ENCODE measurements at regions of chr1 and their contacts with region 1.

Region 1: GRCh38 chr1:21368515-21369289 is 71.2 kb upstream of the NBPF3 start:
- DNase-seq: peak; percentile 52 to 64 (median 60)
- H3K4me3 ChIP-seq: no peak overlapping the region
- H3K27ac ChIP-seq: no peak overlapping the region
- H3K4me1 ChIP-seq: peaks cover 0 to 8% (median 2%) of the 10 kb centered on the region in 4 experiments
- H3K27me3 ChIP-seq: no peaks in the 10 kb centered on the region

Region 2: GRCh38 chr1:21198929-21199328 is 169.8 kb before region 1 on chr1:
- CTCF ChIA-PET with region 1: no interaction called
- POLR2A ChIA-PET with region 1: no interaction called
- DNase-seq: no peak
- H3K4me3 ChIP-seq: no peak overlapping the region
- H3K27ac ChIP-seq: no peak overlapping the region
- H3K4me1 ChIP-seq: peaks cover 0 to 3% (median 1%) of the 10 kb centered on the region in 4 experiments
- H3K27me3 ChIP-seq: no peaks in the 10 kb centered on the region

Region 3: GRCh38 chr1:21216835-21217811 is 151.6 kb before region 1 on chr1:
- CTCF ChIA-PET with region 1: interaction called, 14 read pairs
- POLR2A ChIA-PET with region 1: no interaction called
- DNase-seq: peak; percentile 46 to 76 (median 66)
- H3K4me3 ChIP-seq: no peak overlapping the region
- H3K27ac ChIP-seq: no peak overlapping the region
- H3K4me1 ChIP-seq: no peaks in the 10 kb centered on the region
- H3K27me3 ChIP-seq: no peaks in the 10 kb centered on the region

Region 4: DNA sequence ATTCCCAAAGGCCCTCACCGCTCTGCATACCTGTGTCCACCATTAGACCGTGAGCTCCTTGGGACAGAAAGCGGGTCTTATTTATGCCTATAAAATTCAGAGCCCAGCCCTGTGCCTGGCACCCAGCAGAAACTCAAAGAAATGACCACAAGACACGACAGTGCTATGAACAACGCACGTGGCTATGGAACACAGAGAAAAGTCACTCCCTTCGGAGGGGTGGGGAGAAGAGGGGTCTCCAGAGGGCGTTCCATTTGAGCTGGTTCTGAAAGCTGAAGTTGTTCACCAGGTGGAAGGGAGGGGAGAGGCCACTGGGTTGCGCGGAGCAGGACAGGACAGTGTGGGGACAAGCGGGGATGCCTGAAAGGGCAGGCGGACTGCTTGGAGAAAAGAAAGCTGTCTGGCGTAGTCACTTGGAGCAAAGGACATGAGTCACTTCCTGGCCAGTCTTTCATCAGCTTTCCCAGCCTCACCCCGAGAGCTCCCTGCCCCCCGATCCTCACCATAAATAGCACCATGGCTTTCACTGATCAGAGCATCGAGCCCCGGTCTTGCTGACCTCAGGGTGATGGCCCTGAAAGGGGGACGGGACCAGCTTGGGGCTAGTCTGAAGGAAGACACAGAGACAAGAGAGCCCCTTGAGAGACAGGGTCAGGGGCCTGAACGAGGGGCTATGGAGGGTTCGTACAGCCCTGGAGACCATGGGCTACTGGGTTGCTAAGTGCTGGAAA is 107.0 kb before region 1 on chr1:
- CTCF ChIA-PET with region 1: interaction called, 159 read pairs
- POLR2A ChIA-PET with region 1: interaction called, 3 read pairs
- DNase-seq: peak; percentile 71 to 90 (median 82)
- H3K4me3 ChIP-seq: peak overlapping the region in 3 of 7 experiments; percentile 19 to 58 (median 27)
- H3K27ac ChIP-seq: peak overlapping the region in 1 of 2 experiments; percentile 27
- H3K4me1 ChIP-seq: peaks cover 0 to 25% (median 18%) of the 10 kb centered on the region in 4 experiments
- H3K27me3 ChIP-seq: peaks cover 0 to 3% (median 0%) of the 10 kb centered on the region in 5 experiments

Region 5: GRCh38 chr1:21302747-21303715 is 65.7 kb before region 1 on chr1:
- CTCF ChIA-PET with region 1: interaction called, 59 read pairs
- POLR2A ChIA-PET with region 1: no interaction called
- DNase-seq: peak in 2 of 3 donors; percentile 33 to 40
- H3K4me3 ChIP-seq: no peak overlapping the region
- H3K27ac ChIP-seq: no peak overlapping the region
- H3K4me1 ChIP-seq: peaks cover 3 to 10% (median 8%) of the 10 kb centered on the region in 4 experiments
- H3K27me3 ChIP-seq: no peaks in the 10 kb centered on the region

Region 6: GRCh38 chr1:21355956-21356355 is 12.7 kb before region 1 on chr1:
- CTCF ChIA-PET with region 1: interaction called, 11 read pairs
- POLR2A ChIA-PET with region 1: no interaction called
- DNase-seq: no peak
- H3K4me3 ChIP-seq: no peak overlapping the region
- H3K27ac ChIP-seq: no peak overlapping the region
- H3K4me1 ChIP-seq: no peaks in the 10 kb centered on the region
- H3K27me3 ChIP-seq: no peaks in the 10 kb centered on the region

Region 7: DNA sequence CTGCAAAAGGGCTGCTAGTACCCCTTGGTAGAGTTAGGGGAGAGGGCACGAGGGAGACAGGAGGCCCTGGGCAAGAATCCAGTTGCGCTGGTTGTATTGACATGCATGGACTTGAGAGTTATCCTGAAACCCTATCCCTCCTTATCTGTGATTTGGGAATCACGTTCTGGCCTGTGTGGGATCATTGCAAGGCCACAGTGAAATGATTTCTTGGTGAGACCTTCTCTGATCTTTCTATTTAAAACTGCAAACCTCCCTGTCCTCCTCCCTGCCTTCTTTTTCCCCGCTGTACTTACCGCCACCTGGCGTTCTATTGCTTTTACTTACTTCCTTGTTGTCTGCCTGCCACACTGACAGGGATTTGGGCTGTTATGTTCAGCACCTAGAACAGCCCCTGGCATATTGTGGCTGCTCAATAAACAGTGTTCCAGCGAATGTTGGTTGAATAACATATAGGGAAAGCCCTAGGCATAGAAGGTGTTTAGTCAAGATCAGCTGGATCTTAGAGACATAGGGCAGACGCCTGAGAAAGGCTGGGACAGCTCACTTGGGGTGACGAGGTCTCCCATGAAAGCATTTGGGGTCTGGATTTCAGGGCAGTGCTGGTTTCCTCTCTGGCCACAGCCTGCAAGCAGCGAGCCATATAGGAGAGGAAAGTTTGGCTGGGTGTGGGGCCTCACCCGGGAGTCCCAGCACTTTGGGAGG is 166.1 kb after region 1 on chr1:
- CTCF ChIA-PET with region 1: interaction called, 14 read pairs
- POLR2A ChIA-PET with region 1: no interaction called
- DNase-seq: peak; percentile 65 to 79 (median 78)
- H3K4me3 ChIP-seq: no peak overlapping the region
- H3K27ac ChIP-seq: no peak overlapping the region
- H3K4me1 ChIP-seq: no peaks in the 10 kb centered on the region
- H3K27me3 ChIP-seq: peaks cover 0 to 54% (median 10%) of the 10 kb centered on the region in 5 experiments